ENCODE measurements at regions of chr3 and their contacts with region 1.

Region 1: GRCh38 chr3:48188266-48189201 is at the start of gene CDC25A:
- DNase-seq: peak; percentile 98
- ATAC-seq: peak; percentile 99
- H3K4me3 Mint-ChIP-seq: peak within 1 kb of the TSS; percentile 96
- H3K27ac Mint-ChIP-seq: peak within 1 kb of the TSS; percentile 79
- H3K4me1 Mint-ChIP-seq: peaks cover 15% of the 10 kb centered on the region
- H3K27me3 Mint-ChIP-seq: peaks cover 7% of the 10 kb centered on the region
- total RNA-seq, gene CDC25A: 32.5 to 33.9 TPM

Region 2: GRCh38 chr3:47282424-47283192 is 905.9 kb before region 1 on chr3 and contains the starts of genes KIF9 and KLHL18:
- CTCF ChIA-PET with region 1: no interaction called
- POLR2A ChIA-PET with region 1: no interaction called
- intact Hi-C with region 1: loop called in 1 of 2 experiments (anchors 1 kb)
- DNase-seq: peak; percentile 97
- ATAC-seq: peak; percentile 91
- H3K4me3 Mint-ChIP-seq: peak within 1 kb of the TSS; percentile 95
- H3K27ac Mint-ChIP-seq: peak within 1 kb of the TSS; percentile 99
- H3K4me1 Mint-ChIP-seq: peaks cover 31% of the 10 kb centered on the region
- H3K27me3 Mint-ChIP-seq: no peaks in the 10 kb centered on the region
- total RNA-seq, gene KIF9: 2.7 to 5.3 TPM
- total RNA-seq, gene KLHL18: 19.0 to 22.4 TPM

Region 3: GRCh38 chr3:47513125-47513929 is 675.2 kb before region 1 on chr3 and contains the start of gene ELP6:
- CTCF ChIA-PET with region 1: no interaction called
- POLR2A ChIA-PET with region 1: no interaction called
- intact Hi-C with region 1: loop called in 1 of 2 experiments (anchors 1 kb)
- DNase-seq: peak; percentile 99
- ATAC-seq: peak; percentile 97
- H3K4me3 Mint-ChIP-seq: peak within 1 kb of the TSS; percentile 91
- H3K27ac Mint-ChIP-seq: peak within 1 kb of the TSS; percentile 96
- H3K4me1 Mint-ChIP-seq: peaks cover 20% of the 10 kb centered on the region
- H3K27me3 Mint-ChIP-seq: no peaks in the 10 kb centered on the region
- total RNA-seq, gene ELP6: 27.8 to 40.3 TPM

Region 4: DNA sequence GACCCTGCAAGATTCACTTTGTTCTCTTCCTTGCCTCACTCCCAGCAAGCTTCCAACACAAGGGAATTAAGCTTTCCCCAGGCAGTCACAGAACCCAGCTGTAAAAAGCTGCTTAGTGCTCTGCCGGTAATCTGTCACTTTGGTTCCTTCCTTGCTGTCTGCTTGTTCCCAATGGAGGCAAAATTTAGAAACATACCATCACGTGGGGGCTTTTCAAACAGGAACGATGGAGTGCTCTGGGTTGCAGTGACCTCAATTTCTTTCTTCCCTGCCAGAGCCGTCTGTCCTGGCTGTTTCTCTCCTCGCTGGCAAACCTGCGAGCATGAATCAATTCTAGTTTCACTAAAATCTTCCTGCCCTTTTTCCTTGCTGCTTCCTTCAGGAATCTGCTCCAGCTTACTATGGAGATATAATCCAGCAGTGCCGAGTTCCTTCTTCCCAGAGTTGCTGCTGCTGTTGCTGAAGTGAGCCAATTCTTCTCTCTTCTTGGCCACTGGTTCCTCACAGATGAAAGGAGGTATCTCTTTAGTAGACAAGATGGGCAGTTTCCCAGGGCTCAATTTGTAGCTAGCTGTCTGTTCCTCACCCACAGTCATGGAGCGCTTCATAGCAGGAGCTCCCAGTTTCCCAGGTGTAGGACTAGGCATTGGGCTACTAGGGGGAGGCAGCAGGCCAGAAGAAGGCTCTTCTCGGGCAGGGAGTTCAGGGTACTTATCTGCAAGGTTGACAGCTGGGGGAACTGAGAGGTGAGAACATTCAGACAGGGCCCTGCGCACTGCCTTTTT is 297.5 kb before region 1 on chr3:
- CTCF ChIA-PET with region 1: no interaction called
- POLR2A ChIA-PET with region 1: no interaction called
- intact Hi-C with region 1: no loop called
- DNase-seq: no peak
- ATAC-seq: no peak
- H3K4me3 Mint-ChIP-seq: no peak overlapping the region
- H3K27ac Mint-ChIP-seq: no peak overlapping the region
- H3K4me1 Mint-ChIP-seq: no peaks in the 10 kb centered on the region
- H3K27me3 Mint-ChIP-seq: no peaks in the 10 kb centered on the region

Region 5: DNA sequence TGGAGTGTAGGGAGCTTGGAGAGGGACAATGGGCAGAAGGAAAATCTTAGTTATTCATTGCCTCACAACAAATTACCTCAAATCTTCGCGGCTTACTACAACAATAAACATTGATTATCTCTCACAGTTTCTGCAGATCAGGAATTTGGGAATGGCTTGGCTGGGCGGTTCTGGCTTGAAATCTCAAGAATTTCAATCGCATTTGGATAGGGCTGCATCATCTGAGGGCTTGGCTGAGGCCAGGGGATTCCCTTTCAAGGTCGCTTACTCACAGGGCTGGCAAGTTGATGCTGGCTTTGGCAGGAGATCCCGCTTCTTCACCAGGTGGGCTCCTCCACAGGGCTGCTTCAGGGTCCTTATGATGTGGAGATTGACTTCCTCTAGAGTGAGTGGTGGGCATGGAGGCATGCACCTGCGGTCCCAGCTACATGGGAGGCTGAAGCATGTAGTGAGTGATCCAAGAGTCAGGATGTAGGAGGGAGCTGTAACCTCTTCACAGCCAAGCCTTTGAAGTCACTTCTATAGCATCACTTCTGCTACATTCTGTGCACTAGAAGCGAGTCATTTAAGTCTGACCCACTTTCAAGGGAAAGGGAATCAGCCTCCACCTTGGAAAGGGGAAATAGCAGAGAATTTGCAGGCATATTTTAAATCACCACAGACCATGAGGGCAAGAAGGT is 63.4 kb before region 1 on chr3:
- CTCF ChIA-PET with region 1: no interaction called
- POLR2A ChIA-PET with region 1: no interaction called
- intact Hi-C with region 1: no loop called
- DNase-seq: no peak
- ATAC-seq: no peak
- H3K4me3 Mint-ChIP-seq: no peak overlapping the region
- H3K27ac Mint-ChIP-seq: no peak overlapping the region
- H3K4me1 Mint-ChIP-seq: no peaks in the 10 kb centered on the region
- H3K27me3 Mint-ChIP-seq: no peaks in the 10 kb centered on the region

Region 6: GRCh38 chr3:48240711-48241491 is 52.4 kb after region 1 on chr3 and contains the start of gene ZNF589:
- CTCF ChIA-PET with region 1: interaction called, 3 read pairs
- POLR2A ChIA-PET with region 1: interaction called, 9 read pairs
- intact Hi-C with region 1: loop called (anchors 1 kb)
- DNase-seq: peak; percentile 97
- ATAC-seq: peak; percentile 99
- H3K4me3 Mint-ChIP-seq: peak within 1 kb of the TSS; percentile 87
- H3K27ac Mint-ChIP-seq: peak within 1 kb of the TSS; percentile 84
- H3K4me1 Mint-ChIP-seq: peaks cover 26% of the 10 kb centered on the region
- H3K27me3 Mint-ChIP-seq: no peaks in the 10 kb centered on the region
- total RNA-seq, gene ZNF589: 28.6 to 29.6 TPM

Region 7: GRCh38 chr3:48301020-48301796 is 112.7 kb after region 1 on chr3:
- CTCF ChIA-PET with region 1: no interaction called
- POLR2A ChIA-PET with region 1: no interaction called
- intact Hi-C with region 1: loop called (anchors 1 to 5 kb)
- DNase-seq: peak; percentile 97
- ATAC-seq: peak; percentile 85
- H3K4me3 Mint-ChIP-seq: peak within 1 kb of the TSS; percentile 92
- H3K27ac Mint-ChIP-seq: peak within 1 kb of the TSS; percentile 98
- H3K4me1 Mint-ChIP-seq: peaks cover 27% of the 10 kb centered on the region
- H3K27me3 Mint-ChIP-seq: no peaks in the 10 kb centered on the region

Region 8: GRCh38 chr3:48609088-48610005 is 420.8 kb after region 1 on chr3 and contains the start of gene UQCRC1:
- CTCF ChIA-PET with region 1: no interaction called
- POLR2A ChIA-PET with region 1: no interaction called
- intact Hi-C with region 1: loop called in 1 of 2 experiments (anchors 1 kb)
- DNase-seq: peak; percentile 96
- ATAC-seq: peak; percentile 96
- H3K4me3 Mint-ChIP-seq: peak within 1 kb of the TSS; percentile 97
- H3K27ac Mint-ChIP-seq: peak within 1 kb of the TSS; percentile 95
- H3K4me1 Mint-ChIP-seq: peaks cover 27% of the 10 kb centered on the region
- H3K27me3 Mint-ChIP-seq: no peaks in the 10 kb centered on the region
- total RNA-seq, gene UQCRC1: 205 to 231 TPM

Region 9: DNA sequence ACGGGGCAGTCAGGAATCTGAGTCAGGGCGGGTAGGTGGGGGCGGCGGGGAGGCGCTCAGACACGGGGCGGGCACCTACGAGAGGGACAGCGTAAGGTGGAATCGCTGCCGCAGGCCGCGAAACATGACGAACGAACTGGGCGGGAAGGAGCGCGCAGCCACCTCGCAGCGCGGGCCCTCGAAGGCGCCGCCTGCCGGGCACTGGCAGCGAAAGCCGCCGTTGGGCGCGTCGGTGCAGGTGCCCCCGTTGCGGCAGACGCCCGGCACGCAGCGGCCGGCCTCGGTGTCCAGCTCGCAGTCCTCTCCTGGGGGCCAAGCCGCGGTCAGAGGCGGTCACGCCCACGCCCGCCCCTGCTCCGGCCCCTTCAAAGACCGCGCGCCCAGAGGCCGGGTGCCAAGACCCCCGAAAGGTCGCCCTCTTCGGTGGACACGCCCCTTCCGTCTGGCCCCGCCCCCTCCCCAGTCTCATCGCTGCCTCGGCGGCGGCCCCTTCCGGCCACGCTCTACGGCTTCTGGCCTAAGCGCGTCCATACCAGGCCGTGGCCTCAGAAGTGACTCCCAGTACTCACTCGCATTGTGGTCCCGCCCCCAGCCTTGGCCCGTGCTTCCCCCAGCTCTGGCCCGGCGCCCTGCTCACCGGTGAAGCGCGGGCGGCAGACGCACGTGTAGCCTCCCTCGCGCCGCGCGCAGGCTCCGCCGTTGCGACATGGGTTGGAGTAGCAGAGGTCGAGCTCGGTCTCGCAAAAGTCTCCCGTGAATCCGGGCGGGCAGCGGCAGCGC is 467.7 kb after region 1 on chr3:
- CTCF ChIA-PET with region 1: no interaction called
- POLR2A ChIA-PET with region 1: no interaction called
- intact Hi-C with region 1: loop called in 1 of 2 experiments (anchors 2 kb)
- DNase-seq: peak; percentile 94
- ATAC-seq: peak; percentile 83
- H3K4me3 Mint-ChIP-seq: peak overlapping the region; percentile 71
- H3K27ac Mint-ChIP-seq: peak overlapping the region; percentile 87
- H3K4me1 Mint-ChIP-seq: peaks cover 6% of the 10 kb centered on the region
- H3K27me3 Mint-ChIP-seq: peaks cover 16% of the 10 kb centered on the region

Measured in activated CD4-positive, alpha-beta T cell treated with anti-CD3 and anti-CD28 coated beads for 36 hours (primary cell).